CD8-positive, alpha-beta T cell (primary cell): ENCODE measurements at regions of chr7 and their contacts with region 1.

Region 1: GRCh38 chr7:136009488-136010079 is 32.4 kb upstream of the MTPN start:
- DNase-seq: peak in 3 of 9 experiments; percentile 6 to 66 (median 58)
- ATAC-seq: no peak
- H3K4me3 ChIP-seq: no peak overlapping the region
- H3K4me3 Mint-ChIP-seq: no peak overlapping the region
- H3K27ac ChIP-seq: no peak overlapping the region
- H3K27ac Mint-ChIP-seq: no peak overlapping the region
- H3K4me1 ChIP-seq: no peaks in the 10 kb centered on the region
- H3K4me1 Mint-ChIP-seq: peaks cover 4% of the 10 kb centered on the region
- H3K27me3 ChIP-seq: no peaks in the 10 kb centered on the region
- H3K27me3 Mint-ChIP-seq: peaks cover 2% of the 10 kb centered on the region
- CTCF ChIP-seq: peak; percentile 99

Region 2: DNA sequence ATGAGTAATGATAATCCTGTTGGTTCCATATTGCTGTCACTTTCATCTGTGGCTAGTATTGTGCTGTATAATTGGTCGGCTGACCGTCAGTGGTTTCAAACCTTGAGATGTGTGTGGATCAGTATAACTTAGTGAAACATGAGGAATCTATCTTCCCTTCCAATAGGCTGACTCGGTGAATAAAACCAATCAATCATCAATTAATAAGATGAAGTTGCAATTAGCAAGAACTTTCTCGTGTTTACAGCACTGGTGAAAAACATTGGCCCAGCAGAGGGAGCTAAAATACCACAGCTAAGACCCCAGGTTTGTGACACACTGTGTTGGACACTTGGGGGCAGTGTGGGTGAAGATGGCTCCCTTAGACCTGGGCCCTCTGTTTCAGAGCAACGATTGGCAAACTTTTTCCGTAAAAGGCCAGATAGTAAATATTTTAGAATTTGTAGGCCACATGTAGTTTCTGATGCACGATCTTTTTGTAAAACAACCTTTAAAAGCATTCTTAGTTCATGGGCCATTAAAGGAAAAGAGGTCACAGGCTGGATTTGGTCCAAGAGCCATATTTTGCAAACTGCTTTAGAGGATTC is 728.1 kb before region 1 on chr7:
- CTCF ChIA-PET with region 1: no interaction called
- POLR2A ChIA-PET with region 1: no interaction called
- intact Hi-C with region 1: loop called in 1 of 2 experiments (anchors 5 kb)
- DNase-seq: peak; percentile 51 to 89 (median 78)
- ATAC-seq: peak; percentile 100
- H3K4me3 ChIP-seq: no peak overlapping the region
- H3K4me3 Mint-ChIP-seq: no peak overlapping the region
- H3K27ac ChIP-seq: no peak overlapping the region
- H3K27ac Mint-ChIP-seq: no peak overlapping the region
- H3K4me1 ChIP-seq: no peaks in the 10 kb centered on the region
- H3K4me1 Mint-ChIP-seq: peaks cover 12% of the 10 kb centered on the region
- H3K27me3 ChIP-seq: no peaks in the 10 kb centered on the region
- H3K27me3 Mint-ChIP-seq: peaks cover 4% of the 10 kb centered on the region
- CTCF ChIP-seq: peak; percentile 98

Region 3: DNA sequence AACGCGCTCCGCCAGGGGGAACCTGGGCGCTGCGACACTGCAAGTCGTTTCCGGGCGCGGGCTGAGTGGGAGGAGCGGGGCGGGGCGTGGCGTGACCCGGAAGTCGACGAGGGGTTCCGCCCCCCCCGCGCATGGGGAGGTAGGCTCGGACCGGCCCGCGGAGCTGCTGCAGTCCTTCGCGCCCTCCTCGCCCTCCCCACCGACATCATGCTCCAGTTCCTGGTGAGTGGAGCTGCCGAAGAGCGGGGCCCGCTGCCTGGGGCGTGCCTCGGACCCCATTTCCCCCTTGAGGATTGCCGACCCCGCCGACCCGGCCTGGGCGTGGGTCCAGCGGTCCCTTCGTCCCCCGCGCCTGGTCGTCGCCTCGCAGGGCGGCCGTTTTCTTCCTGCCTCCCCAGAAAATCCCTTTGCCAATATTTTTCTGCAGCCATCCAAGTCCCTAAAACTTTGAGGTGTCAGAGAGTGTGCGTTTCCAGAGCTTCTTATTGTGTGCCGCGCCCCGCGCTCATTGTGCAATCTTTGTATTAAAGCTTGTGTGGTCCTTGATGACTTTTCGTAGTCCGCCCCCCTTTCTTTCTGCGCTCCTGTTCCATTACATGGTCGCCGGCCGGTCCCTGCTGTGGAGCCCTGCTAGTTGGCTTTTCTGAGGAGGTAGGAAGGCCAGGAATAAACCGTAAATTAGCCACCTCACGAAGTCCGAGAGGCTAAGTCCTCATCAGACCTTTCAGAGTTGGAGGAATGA is 347.0 kb before region 1 on chr7 and contains the start of gene STMP1:
- CTCF ChIA-PET with region 1: interaction called, 5 read pairs
- POLR2A ChIA-PET with region 1: no interaction called
- intact Hi-C with region 1: loop called in 1 of 2 experiments (anchors 5 kb)
- DNase-seq: peak; percentile 91 to 99 (median 96)
- ATAC-seq: peak; percentile 99
- H3K4me3 ChIP-seq: peak within 1 kb of the TSS; percentile 72 to 76
- H3K4me3 Mint-ChIP-seq: peak within 1 kb of the TSS; percentile 90
- H3K27ac ChIP-seq: peak within 1 kb of the TSS; percentile 53 to 65
- H3K27ac Mint-ChIP-seq: peak within 1 kb of the TSS; percentile 88
- H3K4me1 ChIP-seq: peaks cover 20% of the 10 kb centered on the region
- H3K4me1 Mint-ChIP-seq: peaks cover 41% of the 10 kb centered on the region
- H3K27me3 ChIP-seq: no peaks in the 10 kb centered on the region
- H3K27me3 Mint-ChIP-seq: no peaks in the 10 kb centered on the region
- CTCF ChIP-seq: peak; percentile 64
- total RNA-seq, gene STMP1: 9.4 to 11.5 TPM

Region 4: GRCh38 chr7:135745703-135746312 is 263.8 kb before region 1 on chr7:
- CTCF ChIA-PET with region 1: no interaction called
- POLR2A ChIA-PET with region 1: no interaction called
- intact Hi-C with region 1: no loop called
- DNase-seq: no peak
- ATAC-seq: no peak
- H3K4me3 ChIP-seq: no peak overlapping the region
- H3K4me3 Mint-ChIP-seq: no peak overlapping the region
- H3K27ac ChIP-seq: no peak overlapping the region
- H3K27ac Mint-ChIP-seq: no peak overlapping the region
- H3K4me1 ChIP-seq: no peaks in the 10 kb centered on the region
- H3K4me1 Mint-ChIP-seq: no peaks in the 10 kb centered on the region
- H3K27me3 ChIP-seq: no peaks in the 10 kb centered on the region
- H3K27me3 Mint-ChIP-seq: peaks cover 4% of the 10 kb centered on the region
- CTCF ChIP-seq: no peak

Region 5: DNA sequence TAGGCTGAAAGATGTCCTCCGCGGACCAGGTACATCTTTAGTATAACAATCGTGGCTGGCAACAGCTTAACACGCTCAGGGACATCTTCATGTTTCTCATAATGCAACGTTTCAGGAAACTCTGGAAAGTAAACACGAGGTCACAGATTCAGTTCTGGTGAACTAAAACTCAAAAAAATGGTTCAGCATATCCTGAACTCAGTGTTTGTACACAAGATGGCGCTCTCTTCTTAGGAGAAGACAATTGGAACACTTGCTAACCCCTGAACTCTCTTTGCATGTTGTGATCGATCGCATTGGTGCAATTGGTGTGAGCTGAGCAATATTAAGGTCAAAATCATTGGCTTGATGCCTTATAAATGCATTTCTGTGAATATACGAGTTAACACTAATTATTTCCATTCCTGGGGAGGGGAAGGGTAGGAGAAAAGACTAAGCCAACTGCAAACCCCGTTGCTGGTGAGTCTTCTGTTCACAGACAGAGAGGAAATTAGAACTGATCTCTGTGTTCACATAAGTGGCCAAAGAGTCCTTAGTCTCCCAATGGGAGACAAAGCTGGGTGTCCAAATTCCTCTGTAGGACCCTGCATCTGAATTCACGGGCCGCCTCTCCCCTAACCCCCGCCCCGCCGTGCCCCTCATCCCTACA is 208.4 kb before region 1 on chr7:
- CTCF ChIA-PET with region 1: interaction called, 122 read pairs
- POLR2A ChIA-PET with region 1: no interaction called
- intact Hi-C with region 1: loop called in 1 of 2 experiments (anchors 1 kb)
- DNase-seq: peak in 5 of 9 experiments; percentile 4 to 77 (median 32)
- ATAC-seq: peak; percentile 51
- H3K4me3 ChIP-seq: no peak overlapping the region
- H3K4me3 Mint-ChIP-seq: no peak overlapping the region
- H3K27ac ChIP-seq: no peak overlapping the region
- H3K27ac Mint-ChIP-seq: no peak overlapping the region
- H3K4me1 ChIP-seq: no peaks in the 10 kb centered on the region
- H3K4me1 Mint-ChIP-seq: peaks cover 5% of the 10 kb centered on the region
- H3K27me3 ChIP-seq: no peaks in the 10 kb centered on the region
- H3K27me3 Mint-ChIP-seq: peaks cover 9% of the 10 kb centered on the region
- CTCF ChIP-seq: peak; percentile 73

Region 6: GRCh38 chr7:135970682-135971365 is 38.8 kb before region 1 on chr7:
- CTCF ChIA-PET with region 1: interaction called, 6 read pairs
- POLR2A ChIA-PET with region 1: no interaction called
- intact Hi-C with region 1: loop called in 1 of 2 experiments (anchors 5 kb)
- DNase-seq: peak in 1 of 9 experiments; percentile 20
- ATAC-seq: no peak
- H3K4me3 ChIP-seq: no peak overlapping the region
- H3K4me3 Mint-ChIP-seq: peak overlapping the region; percentile 1
- H3K27ac ChIP-seq: peak overlapping the region in 1 of 2 experiments; percentile 31
- H3K27ac Mint-ChIP-seq: no peak overlapping the region
- H3K4me1 ChIP-seq: peaks cover 66% of the 10 kb centered on the region
- H3K4me1 Mint-ChIP-seq: peaks cover 82% of the 10 kb centered on the region
- H3K27me3 ChIP-seq: no peaks in the 10 kb centered on the region
- H3K27me3 Mint-ChIP-seq: no peaks in the 10 kb centered on the region
- CTCF ChIP-seq: no peak

Region 7: DNA sequence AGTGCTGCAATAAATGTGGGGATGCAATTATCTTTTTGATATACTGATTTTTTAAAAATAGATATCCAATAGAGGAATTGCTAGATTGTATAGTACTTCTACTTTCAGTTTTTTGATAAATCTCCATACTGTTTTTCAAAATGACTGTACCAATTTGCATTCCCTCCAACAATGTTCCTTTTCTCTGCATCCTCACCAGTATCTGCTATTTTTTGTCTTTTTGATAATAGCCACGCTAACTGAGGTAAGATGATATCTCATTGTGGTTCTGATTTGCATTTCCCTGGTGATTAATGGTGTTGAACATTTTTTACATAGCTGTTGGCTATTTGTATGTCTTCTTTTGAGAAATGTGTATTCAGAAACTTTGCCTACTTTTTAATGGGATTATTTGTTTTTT is 185.3 kb after region 1 on chr7:
- CTCF ChIA-PET with region 1: no interaction called
- POLR2A ChIA-PET with region 1: no interaction called
- intact Hi-C with region 1: no loop called
- DNase-seq: no peak
- ATAC-seq: no peak
- H3K4me3 ChIP-seq: no peak overlapping the region
- H3K4me3 Mint-ChIP-seq: no peak overlapping the region
- H3K27ac ChIP-seq: no peak overlapping the region
- H3K27ac Mint-ChIP-seq: no peak overlapping the region
- H3K4me1 ChIP-seq: no peaks in the 10 kb centered on the region
- H3K4me1 Mint-ChIP-seq: no peaks in the 10 kb centered on the region
- H3K27me3 ChIP-seq: no peaks in the 10 kb centered on the region
- H3K27me3 Mint-ChIP-seq: no peaks in the 10 kb centered on the region
- CTCF ChIP-seq: no peak

Region 8: DNA sequence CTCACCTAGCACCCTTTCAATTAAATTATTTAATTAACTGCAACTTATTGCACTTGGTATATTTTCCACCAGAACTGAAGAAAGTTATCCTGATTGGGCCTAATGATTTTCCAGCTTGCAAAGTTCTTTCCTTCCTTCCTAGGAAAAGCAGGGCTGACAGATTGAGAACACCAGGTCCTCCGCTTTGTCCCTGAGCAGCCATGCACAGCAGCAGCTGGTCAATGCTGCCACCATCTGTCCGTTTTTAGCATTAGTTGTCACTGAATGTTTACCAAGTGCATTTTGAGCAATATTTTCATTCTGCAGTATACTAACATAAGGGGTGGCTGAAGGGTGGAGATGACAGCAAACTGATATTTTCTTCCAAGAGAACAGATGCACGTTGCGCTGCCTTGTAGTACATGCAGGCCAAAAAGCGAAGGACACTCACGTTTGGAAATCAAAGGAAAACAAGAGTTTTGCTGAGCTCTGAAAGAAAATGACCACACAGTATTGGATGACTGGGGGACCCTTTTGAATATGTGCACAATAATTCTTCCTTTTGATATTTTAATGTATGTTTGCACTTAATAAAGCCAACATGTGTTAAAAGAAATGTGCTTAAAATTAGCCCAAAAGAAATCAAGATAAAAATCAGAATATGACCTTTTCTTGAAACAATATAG is 1582.8 kb after region 1 on chr7:
- CTCF ChIA-PET with region 1: no interaction called
- POLR2A ChIA-PET with region 1: no interaction called
- intact Hi-C with region 1: no loop called
- DNase-seq: no peak
- ATAC-seq: no peak
- H3K4me3 ChIP-seq: no peak overlapping the region
- H3K4me3 Mint-ChIP-seq: no peak overlapping the region
- H3K27ac ChIP-seq: no peak overlapping the region
- H3K27ac Mint-ChIP-seq: no peak overlapping the region
- H3K4me1 ChIP-seq: no peaks in the 10 kb centered on the region
- H3K4me1 Mint-ChIP-seq: no peaks in the 10 kb centered on the region
- H3K27me3 ChIP-seq: no peaks in the 10 kb centered on the region
- H3K27me3 Mint-ChIP-seq: peaks cover 5% of the 10 kb centered on the region
- CTCF ChIP-seq: no peak